Gastrocnemius medialis (tissue), 4 donors: ENCODE measurements at regions of chr5 and their contacts with region 1.

Region 1: DNA sequence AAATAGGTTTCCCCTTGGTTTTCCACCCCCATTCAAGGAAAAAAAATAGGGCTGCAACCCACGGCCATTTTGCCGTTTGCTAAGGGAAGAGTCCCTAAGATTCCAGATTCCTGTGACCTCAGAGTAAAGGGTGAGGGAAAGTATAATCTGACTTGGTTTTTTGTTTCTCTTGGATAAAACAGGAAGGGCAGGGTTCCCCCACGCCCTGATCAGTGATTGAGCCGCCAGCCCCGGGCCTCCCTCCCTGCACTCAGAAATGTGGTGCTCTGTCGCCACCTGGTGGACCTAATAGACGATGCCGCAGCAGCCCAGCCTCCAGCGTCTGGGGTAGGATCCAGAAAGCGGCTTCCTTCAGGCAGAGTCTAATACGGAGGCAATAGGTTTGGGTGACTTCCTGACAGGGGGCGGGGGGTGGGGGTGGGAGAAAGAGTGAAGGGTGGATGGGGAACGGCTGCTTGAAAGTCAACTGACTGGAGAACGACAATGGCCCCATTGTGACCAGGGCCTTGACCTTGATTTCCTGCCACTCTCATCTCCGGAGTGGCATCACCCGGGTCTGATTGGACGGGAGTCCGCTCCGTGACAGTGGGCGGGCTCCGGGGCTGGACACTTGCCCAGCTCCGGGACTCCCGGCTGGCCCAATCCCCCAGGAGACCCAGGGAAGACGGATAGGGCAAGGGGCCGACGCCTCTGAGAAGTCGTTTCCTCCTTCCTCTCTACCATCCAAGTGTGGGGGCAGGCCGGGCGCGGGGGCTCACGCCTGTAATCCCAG is 17.8 kb upstream of the CYSTM1 start:
- DNase-seq: peak; percentile 70 to 80
- ATAC-seq: peak; percentile 93 to 96
- H3K4me3 ChIP-seq: peak overlapping the region; percentile 38 to 65 (median 50)
- H3K27ac ChIP-seq: peak overlapping the region in 3 of 4 donors; percentile 52 to 55 (median 54)
- H3K4me1 ChIP-seq: peaks cover 7 to 11% of the 10 kb centered on the region in 2 donors
- H3K27me3 ChIP-seq: no peaks in the 10 kb centered on the region
- CTCF ChIP-seq: peak; percentile 88 to 93 (median 91)
- POLR2A ChIP-seq: no peak

Region 2: GRCh38 chr5:139844472-139845145 is 312.6 kb before region 1 on chr5:
- in situ Hi-C with region 1: no loop called
- intact Hi-C with region 1: loop called (anchors 10 kb)
- DNase-seq: peak; percentile 20 to 68
- ATAC-seq: peak in 1 of 2 donors; percentile 13
- H3K4me3 ChIP-seq: no peak overlapping the region
- H3K27ac ChIP-seq: no peak overlapping the region
- H3K4me1 ChIP-seq: peaks cover 0 to 11% of the 10 kb centered on the region in 2 donors
- H3K27me3 ChIP-seq: no peaks in the 10 kb centered on the region
- CTCF ChIP-seq: peak; percentile 46 to 77 (median 65)
- POLR2A ChIP-seq: no peak

Region 3: DNA sequence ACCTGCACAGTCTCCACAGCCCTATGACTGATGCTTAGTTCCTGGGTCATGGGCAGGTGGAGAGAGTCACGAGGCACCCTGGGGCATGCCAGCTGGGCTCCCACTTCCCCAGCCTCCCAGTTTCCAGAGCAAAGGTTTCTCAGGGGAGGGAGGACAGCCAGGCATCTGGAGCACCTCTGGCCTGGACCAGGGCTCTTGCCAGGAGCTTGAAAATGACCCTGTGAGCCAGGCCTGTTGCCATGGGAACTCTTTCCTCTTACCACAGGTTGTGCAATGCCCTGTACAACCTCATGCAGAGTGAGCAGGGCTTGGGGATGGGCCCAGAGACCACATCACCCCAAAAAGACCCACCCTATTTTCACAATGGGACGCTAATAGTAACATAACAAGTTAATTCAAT is 248.5 kb before region 1 on chr5:
- in situ Hi-C with region 1: no loop called
- intact Hi-C with region 1: no loop called
- DNase-seq: peak in 1 of 2 donors; percentile 43
- ATAC-seq: peak in 1 of 2 donors; percentile 19
- H3K4me3 ChIP-seq: no peak overlapping the region
- H3K27ac ChIP-seq: no peak overlapping the region
- H3K4me1 ChIP-seq: peaks cover 12 to 17% of the 10 kb centered on the region in 2 donors
- H3K27me3 ChIP-seq: no peaks in the 10 kb centered on the region
- CTCF ChIP-seq: no peak
- POLR2A ChIP-seq: no peak

Region 4: DNA sequence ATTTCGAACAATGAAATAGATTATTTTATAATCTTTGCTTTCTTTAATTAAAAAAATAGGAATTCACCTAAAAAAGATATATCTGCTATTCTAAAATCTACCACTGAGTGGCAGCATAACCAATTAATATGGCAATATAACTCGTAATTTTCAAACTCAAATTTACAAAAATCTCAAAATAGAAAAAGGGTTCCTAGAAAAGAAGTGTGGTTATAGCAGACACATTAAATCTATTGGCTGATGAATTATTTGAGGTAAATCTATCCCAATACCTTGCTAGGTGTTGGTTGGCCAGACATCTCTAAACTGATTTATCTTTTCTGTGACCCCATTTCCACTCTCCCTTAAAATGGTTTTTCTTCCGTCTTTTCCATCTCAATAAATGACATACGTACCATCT is 83.9 kb before region 1 on chr5:
- in situ Hi-C with region 1: loop called (anchors 5 kb)
- intact Hi-C with region 1: loop called (anchors 1 kb)
- DNase-seq: no peak
- ATAC-seq: peak in 1 of 2 donors; percentile 16
- H3K4me3 ChIP-seq: no peak overlapping the region
- H3K27ac ChIP-seq: no peak overlapping the region
- H3K4me1 ChIP-seq: no peaks in the 10 kb centered on the region
- H3K27me3 ChIP-seq: no peaks in the 10 kb centered on the region
- CTCF ChIP-seq: peak; percentile 53 to 74 (median 64)
- POLR2A ChIP-seq: no peak

Region 5: DNA sequence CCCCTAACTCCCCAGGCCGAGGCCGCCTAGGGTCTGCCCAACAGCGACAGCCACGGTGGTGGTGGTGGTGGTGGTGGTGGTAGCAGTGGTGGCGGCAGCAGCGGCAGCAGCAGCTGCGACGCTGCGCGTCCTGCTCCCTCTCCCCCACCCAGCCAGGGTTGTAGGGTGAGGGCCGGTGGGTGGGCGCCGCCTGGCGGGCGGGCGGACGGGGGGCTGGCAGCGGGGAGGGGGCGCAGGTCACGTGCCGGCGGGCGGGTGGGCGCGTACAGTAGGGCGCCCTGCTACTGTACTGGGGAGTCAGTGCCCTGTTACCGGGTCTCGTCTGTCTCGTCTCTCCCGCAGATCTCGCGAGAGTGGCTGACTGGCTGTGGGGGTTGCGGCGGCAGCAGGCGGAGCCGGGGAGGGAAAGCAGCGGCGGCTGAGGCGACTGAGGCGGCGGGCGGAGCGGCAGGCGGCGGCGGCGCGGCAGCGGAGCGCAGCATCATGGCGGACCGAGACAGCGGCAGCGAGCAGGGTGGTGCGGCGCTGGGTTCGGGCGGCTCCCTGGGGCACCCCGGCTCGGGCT is 43.4 kb before region 1 on chr5 and contains the start of gene PURA:
- in situ Hi-C with region 1: no loop called
- intact Hi-C with region 1: loop called (anchors 5 kb)
- DNase-seq: peak; percentile 91 to 94
- ATAC-seq: peak; percentile 94 to 95
- H3K4me3 ChIP-seq: peak within 1 kb of the TSS; percentile 78 to 91 (median 85)
- H3K27ac ChIP-seq: peak within 1 kb of the TSS; percentile 94 to 97 (median 95)
- H3K4me1 ChIP-seq: peaks cover 64 to 70% of the 10 kb centered on the region in 2 donors
- H3K27me3 ChIP-seq: no peaks in the 10 kb centered on the region
- CTCF ChIP-seq: peak in 2 of 5 experiments; percentile 11 to 37
- POLR2A ChIP-seq: peak; percentile 79 to 80
- total RNA-seq, gene PURA: 13.6 to 20.6 (median 16.5) TPM

Region 6: DNA sequence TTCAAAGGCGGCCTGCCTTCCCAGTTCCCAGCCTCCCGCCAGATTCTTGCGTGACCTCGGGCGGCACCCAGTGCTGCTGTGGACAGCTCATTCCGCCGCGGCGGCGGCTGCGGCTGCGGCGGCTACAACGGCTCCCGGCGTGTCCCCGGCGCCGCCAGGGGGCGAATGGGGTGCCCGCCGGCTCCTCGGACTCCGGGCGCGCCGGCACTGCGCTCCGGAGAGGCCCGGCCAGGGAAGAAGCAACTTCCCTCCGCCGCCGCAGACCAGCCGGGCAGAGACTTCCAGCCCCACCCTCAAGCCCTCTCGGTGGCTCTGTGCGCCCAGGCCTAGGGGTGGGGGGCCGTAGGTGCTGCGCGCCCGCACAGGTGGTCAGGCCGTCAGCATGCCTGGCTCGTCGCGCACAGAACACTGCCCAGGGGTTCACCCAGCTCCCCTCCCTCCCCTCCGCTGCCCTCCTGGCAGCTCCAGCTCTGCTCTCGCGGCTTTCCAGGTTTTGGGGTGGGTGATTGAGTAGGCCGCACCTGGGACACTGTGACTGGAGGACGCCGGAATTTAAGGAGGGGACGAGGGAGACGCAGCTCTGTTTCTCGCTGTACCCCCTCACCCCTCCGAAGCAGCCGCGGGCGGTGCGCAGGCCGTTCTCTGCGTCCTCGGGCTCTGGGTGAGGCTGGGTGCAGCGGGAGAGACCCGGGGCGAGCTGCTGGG is 11.2 kb before region 1 on chr5:
- in situ Hi-C with region 1: no loop called
- intact Hi-C with region 1: loop called (anchors 1 kb)
- DNase-seq: peak; percentile 40 to 59
- ATAC-seq: peak; percentile 74 to 79
- H3K4me3 ChIP-seq: peak overlapping the region; percentile 51 to 79 (median 56)
- H3K27ac ChIP-seq: no peak overlapping the region
- H3K4me1 ChIP-seq: peaks cover 14 to 23% of the 10 kb centered on the region in 2 donors
- H3K27me3 ChIP-seq: no peaks in the 10 kb centered on the region
- CTCF ChIP-seq: peak; percentile 73 to 89 (median 88)
- POLR2A ChIP-seq: no peak

Region 7: DNA sequence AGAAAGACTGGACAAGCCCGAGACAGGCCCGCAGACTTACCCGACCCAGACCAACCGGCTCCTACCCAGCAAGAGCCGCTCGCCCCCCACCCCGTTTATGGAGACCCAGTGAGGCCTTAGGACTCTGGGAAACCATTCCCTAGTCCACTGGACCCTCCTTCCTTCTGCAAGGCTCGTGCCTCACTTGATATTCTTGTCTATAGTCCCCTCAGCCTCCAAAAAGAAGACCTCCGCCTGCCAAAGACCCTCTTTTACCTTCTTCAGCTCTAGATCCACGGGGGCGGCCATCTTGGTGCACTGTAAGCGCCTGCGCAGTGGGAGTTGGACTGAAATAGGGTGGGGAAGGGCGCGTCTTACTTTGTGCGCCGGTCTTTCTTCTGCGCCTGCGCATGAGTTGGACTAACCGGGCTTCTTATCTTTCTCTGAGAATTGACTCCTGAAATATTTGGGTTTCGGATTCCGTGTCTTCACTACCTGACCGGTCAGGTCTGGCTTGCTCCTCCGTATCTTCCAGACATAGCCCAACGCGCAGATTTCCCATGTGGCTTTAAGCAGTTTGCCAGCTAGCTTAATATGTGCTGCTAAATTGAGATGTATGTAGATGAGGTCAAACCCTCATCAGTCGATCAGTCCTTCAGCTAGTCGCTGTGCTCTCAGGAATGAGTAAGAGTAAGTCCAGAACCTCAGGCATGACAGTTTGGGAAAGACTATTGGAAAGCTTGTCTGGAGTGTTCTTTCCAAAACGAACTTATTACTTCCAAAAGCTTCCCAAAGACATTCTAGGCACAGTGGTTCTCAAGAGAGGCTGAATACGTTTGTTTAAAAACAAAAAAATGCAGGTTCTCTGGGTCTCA is 145.8 kb after region 1 on chr5 and contains the start of gene PFDN1:
- in situ Hi-C with region 1: no loop called
- intact Hi-C with region 1: no loop called
- DNase-seq: peak; percentile 90 to 93
- ATAC-seq: peak; percentile 98 to 99
- H3K4me3 ChIP-seq: peak within 1 kb of the TSS; percentile 80 to 96 (median 88)
- H3K27ac ChIP-seq: peak within 1 kb of the TSS; percentile 90 to 95 (median 94)
- H3K4me1 ChIP-seq: peaks cover 30 to 34% of the 10 kb centered on the region in 2 donors
- H3K27me3 ChIP-seq: no peaks in the 10 kb centered on the region
- CTCF ChIP-seq: no peak
- POLR2A ChIP-seq: peak; percentile 51 to 62
- total RNA-seq, gene PFDN1: 47.9 to 81.0 (median 77.9) TPM